Stomach (tissue), 19 donors: ENCODE measurements at regions of chr5 and their contacts with region 1.

Region 1: GRCh38 chr5:139341650-139342422 is at the start of gene PAIP2:
- DNase-seq: peak; percentile 98 to 99
- H3K4me3 ChIP-seq: peak within 1 kb of the TSS; percentile 75 to 98 (median 87)
- H3K27ac ChIP-seq: peak within 1 kb of the TSS; percentile 89 to 99 (median 97)
- H3K4me1 ChIP-seq: peaks cover 31 to 54% (median 46%) of the 10 kb centered on the region in 4 donors
- H3K27me3 ChIP-seq: no peaks in the 10 kb centered on the region
- CTCF ChIP-seq: peak in 5 of 7 experiments; percentile 64 to 81 (median 77)
- EP300 ChIP-seq: no peak
- POLR2A ChIP-seq: peak in 2 of 4 donors; percentile 87 to 91
- total RNA-seq, gene PAIP2: 12.7 to 92.7 (median 51.3) TPM

Region 2: DNA sequence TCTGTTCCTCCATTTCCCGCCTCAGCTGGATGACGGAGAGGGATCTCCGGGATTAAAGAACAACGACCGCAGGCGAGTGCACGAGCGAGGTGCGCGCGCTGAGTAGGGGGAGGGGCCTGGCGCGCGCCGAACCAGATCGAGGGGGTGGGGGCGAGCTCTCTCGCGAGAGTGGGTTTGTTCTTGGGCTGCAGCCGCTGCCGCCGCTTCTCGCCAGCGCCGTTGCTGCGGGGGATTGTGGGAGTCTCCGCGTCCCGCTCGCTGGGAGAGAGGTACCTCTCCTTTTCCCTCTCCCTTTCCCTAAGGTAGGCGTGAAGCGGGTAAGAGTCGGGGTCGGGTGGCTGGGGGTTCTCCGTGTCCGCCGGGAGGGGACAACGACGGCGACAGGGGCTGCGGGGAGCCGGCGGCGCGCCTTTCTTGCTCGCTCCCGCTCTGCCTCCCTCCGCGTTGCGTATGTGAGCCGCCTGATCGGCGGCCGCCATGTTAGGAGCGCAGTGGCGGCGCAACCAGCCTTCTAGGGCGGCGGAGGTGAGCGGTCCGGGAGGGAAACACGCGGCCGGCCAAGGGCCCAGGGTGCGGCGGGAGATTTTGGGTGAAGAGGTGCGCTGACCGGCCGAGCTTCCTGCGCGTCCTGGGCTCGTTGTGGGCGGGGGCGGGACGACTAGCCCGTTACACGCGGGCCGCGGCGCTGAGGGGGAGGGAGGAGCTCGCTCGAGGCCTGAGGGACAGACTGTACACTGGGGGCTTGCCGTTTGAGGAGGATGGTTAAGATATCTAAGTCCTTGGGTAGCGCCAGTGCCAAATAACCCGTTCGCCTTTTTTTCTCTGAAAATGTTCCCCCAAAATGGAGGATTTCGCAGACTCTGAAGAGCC is 48.1 kb before region 1 on chr5 and contains the start of gene MATR3:
- intact Hi-C with region 1: loop called (anchors 10 kb)
- DNase-seq: peak; percentile 96 to 99
- H3K4me3 ChIP-seq: peak within 1 kb of the TSS; percentile 71 to 84 (median 80)
- H3K27ac ChIP-seq: peak within 1 kb of the TSS; percentile 97 to 99 (median 99)
- H3K4me1 ChIP-seq: peaks cover 32 to 44% (median 39%) of the 10 kb centered on the region in 4 donors
- H3K27me3 ChIP-seq: no peaks in the 10 kb centered on the region
- CTCF ChIP-seq: no peak
- EP300 ChIP-seq: no peak
- POLR2A ChIP-seq: peak in 2 of 4 donors; percentile 88 to 94
- total RNA-seq, gene MATR3: 73.6 to 352 (median 176) TPM